AG04450 (cell line): ENCODE measurements at regions of chr9 and their contacts with region 1.

Region 1: GRCh38 chr9:78369639-78370219 is 72.8 kb downstream of the PSAT1 start:
- DNase-seq: peak; percentile 42
- H3K4me3 ChIP-seq: no peak overlapping the region
- H3K27ac ChIP-seq: no peak overlapping the region
- H3K27me3 ChIP-seq: peaks cover 3% of the 10 kb centered on the region
- CTCF ChIP-seq: peak; percentile 83

Region 2: DNA sequence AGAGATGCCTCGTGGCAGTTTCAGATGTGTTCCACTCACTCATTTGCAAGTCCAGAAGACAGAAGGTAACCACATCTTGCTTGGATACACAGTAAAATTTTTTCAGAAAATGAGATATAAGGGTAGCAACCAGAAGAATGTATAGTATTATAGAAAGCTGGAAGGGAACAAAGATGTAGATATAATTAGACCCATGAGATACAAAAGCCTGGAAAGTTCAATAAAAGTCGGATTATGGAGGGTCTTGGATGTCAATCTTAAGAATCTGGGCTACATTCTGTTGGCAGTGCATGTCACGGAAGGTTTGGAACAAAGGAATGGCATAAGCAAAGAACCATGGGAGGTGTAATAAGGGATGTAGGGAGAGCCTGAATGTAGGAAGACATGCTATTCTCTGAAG is 139.0 kb before region 1 on chr9:
- CTCF ChIA-PET with region 1: no interaction called
- POLR2A ChIA-PET with region 1: no interaction called
- DNase-seq: no peak
- H3K4me3 ChIP-seq: no peak overlapping the region
- H3K27ac ChIP-seq: no peak overlapping the region
- H3K27me3 ChIP-seq: no peaks in the 10 kb centered on the region
- CTCF ChIP-seq: no peak

Region 3: DNA sequence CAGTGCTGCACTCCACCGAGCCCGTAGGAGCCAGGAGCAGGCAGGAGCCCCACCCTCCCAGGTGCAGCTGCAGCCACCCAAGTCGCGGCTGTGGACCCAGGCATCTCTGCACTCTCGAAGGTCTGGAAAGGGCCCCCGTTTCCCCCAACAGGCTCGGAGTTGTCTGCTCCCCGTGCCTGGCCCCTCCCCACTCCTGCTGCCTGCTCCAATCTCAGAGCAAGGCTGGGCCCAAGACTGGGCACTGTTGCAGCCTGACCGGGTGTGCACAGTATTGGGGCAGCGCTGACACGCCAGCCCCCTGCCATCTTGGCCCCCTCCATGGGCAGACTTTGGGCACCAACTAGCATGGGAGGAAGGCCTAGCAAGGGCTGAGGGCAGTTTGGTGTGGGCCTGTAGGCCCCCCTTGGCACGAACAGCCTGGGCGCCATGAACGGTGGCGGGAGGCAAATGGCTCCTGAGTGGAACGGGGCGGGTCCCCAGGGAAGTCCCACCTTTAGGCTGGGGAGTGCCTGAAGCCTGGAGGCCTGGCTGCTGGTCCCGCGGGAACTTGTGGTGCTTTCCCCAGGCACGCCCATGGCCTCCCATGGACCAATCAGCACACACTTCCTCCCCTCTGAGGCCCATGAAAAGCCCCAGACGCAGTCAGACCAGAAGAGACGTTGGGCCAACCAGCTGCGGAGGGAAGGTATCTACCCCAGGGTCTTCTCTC is 12.4 kb before region 1 on chr9:
- CTCF ChIA-PET with region 1: interaction called, 10 read pairs
- POLR2A ChIA-PET with region 1: no interaction called
- DNase-seq: no peak
- H3K4me3 ChIP-seq: no peak overlapping the region
- H3K27ac ChIP-seq: no peak overlapping the region
- H3K27me3 ChIP-seq: no peaks in the 10 kb centered on the region
- CTCF ChIP-seq: no peak

Region 4: GRCh38 chr9:78439190-78439865 is 69.6 kb after region 1 on chr9:
- CTCF ChIA-PET with region 1: interaction called, 20 read pairs
- POLR2A ChIA-PET with region 1: no interaction called
- DNase-seq: peak; percentile 81
- H3K4me3 ChIP-seq: peak overlapping the region; percentile 52
- H3K27ac ChIP-seq: no peak overlapping the region
- H3K27me3 ChIP-seq: peaks cover 10% of the 10 kb centered on the region
- CTCF ChIP-seq: peak; percentile 96

Region 5: DNA sequence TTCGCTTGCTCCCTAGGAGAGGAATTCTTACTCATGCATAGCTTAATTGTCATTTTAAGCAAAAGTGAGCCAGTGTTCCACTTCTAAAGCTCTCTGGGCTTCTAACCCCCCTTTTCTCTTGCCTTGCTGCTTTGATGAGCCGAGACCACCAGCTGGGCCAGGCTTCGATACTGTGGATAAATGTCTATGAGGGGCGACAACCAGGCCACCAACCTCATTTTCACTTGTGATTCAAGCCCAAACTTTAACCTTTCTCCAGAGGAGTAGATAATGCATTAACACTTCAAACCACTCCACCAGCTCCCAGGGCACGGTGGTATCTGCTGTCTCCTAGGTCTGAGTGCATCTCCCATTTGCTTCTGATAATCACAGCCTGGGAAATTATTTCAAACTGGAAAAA is 132.8 kb after region 1 on chr9:
- CTCF ChIA-PET with region 1: no interaction called
- POLR2A ChIA-PET with region 1: no interaction called
- DNase-seq: no peak
- H3K4me3 ChIP-seq: no peak overlapping the region
- H3K27ac ChIP-seq: no peak overlapping the region
- H3K27me3 ChIP-seq: peaks cover 10% of the 10 kb centered on the region
- CTCF ChIP-seq: no peak

Region 6: DNA sequence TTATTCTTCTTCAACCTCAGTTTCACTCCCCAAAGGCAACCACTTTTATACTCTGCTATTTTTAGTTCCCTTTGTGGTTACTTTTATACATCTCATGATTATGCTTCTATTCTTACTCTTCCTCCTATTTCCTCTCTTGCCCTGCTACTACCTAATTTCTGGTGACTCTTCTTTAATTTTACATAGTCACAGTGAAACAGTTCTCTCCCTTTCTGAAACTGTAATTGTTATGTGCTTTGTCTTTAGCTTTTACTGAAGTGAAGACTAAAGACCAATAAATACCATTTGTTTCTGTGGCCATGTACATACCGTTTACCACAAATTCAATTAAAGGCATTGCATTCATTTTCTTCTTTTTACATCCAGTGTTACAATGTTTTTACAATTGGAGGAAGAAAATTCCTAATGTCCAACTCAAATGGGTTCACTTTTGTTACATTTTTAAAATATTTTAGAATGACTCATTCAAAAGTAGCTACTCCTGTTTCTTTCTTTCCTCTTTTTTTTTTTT is 337.8 kb after region 1 on chr9:
- CTCF ChIA-PET with region 1: no interaction called
- POLR2A ChIA-PET with region 1: interaction called, 10 read pairs
- DNase-seq: peak; percentile 32
- H3K4me3 ChIP-seq: no peak overlapping the region
- H3K27ac ChIP-seq: no peak overlapping the region
- H3K27me3 ChIP-seq: no peaks in the 10 kb centered on the region
- CTCF ChIP-seq: no peak